ENCODE measurements at regions of chr6 and their contacts with region 1.

Region 1: GRCh38 chr6:11653028-11653583 is 115.6 kb downstream of the TMEM170B start:
- DNase-seq: no peak
- ATAC-seq: peak; percentile 52
- H3K4me3 ChIP-seq: no peak overlapping the region
- H3K27ac ChIP-seq: no peak overlapping the region
- H3K4me1 ChIP-seq: peaks cover 24% of the 10 kb centered on the region
- H3K27me3 ChIP-seq: no peaks in the 10 kb centered on the region
- CTCF ChIP-seq: no peak

Region 2: DNA sequence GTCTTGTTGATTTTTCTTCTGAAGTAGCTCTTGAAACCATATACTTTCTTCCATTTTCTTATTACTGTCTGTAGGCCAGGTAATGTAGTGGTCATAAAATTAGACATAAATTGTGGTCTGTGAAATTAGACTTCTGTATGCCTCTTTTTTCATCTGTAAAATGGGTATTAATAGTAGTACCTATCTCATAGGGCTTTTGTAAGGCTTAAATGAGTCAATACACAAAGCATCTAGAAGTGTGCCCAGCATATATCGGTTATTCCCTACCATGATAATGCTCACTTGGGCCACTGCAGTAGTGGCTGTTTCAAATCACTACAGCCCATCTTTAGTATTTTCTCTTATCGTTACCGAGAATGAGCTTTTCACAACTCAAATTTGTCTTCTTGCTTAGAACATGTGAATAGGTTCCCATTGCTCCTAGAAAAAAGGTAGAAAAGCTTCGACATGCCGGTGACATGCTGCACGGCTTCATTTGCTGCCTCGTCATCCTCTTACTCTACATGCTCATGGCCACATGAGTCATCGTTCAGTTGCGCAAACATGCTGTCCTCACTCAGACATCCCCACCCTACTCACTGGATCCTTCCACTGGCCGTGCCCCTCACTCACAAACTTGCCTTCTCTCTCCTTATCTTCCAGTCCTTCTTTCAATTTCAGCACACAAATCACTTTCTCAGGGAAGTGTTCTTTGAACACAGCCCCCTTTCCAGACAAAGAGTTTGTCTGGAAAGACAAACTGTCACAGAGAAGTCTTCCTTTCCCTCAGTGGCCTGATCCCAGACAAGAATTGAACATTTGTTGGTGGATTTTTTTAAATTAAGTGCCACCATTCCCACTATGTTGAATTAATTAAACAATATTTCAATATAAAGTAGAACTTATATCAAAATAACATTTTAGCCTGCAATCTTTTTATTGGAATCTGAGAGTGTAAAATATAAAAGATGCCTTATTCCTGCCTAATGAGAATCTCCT is 509.4 kb before region 1 on chr6:
- intact Hi-C with region 1: no loop called
- DNase-seq: peak; percentile 74
- ATAC-seq: peak; percentile 82
- H3K4me3 ChIP-seq: no peak overlapping the region
- H3K27ac ChIP-seq: no peak overlapping the region
- H3K4me1 ChIP-seq: no peaks in the 10 kb centered on the region
- H3K27me3 ChIP-seq: no peaks in the 10 kb centered on the region
- CTCF ChIP-seq: no peak

Region 3: DNA sequence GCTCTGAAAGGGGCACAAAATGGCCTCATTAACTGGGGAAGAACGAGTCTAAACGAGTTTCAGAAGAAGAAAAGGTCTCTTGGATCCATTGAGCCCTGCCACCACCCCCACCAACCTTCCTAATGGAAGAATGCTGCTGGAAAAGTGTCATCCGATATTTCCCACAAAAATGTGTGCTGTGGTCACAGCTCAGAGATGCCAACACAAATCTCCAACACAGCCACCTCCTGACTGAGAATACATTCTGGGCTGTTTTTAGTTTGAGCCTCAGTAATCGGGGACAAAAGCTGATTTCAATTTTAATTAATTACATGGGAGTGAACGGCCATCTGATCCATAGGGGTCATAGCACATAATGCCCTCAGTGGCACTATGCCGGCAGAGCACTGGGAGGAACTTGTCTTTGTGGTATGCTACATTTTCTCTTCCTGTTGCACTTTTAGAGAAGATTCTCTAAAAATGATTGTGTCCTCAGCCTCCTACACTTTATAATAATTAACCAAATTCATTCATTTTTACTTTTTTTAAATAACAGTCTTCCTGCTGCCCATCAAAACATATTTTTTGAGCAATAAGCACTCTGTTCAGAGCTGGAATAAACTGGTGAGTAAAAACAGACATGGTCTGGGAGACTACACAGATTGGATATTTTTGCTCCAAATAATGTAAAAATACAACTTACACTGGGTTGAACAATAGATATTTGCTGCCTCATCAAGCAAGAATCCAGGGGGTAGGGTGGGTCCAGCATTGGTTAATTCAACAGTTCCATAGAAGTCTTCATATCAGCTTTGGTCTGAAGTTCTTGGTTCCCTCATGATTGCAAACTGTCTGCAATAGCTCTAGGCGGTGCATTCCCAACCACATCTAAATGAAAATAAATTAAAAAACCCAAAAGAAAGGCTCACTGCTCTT is 259.1 kb before region 1 on chr6:
- intact Hi-C with region 1: no loop called
- DNase-seq: no peak
- ATAC-seq: no peak
- H3K4me3 ChIP-seq: no peak overlapping the region
- H3K27ac ChIP-seq: peak overlapping the region; percentile 75
- H3K4me1 ChIP-seq: peaks cover 51% of the 10 kb centered on the region
- H3K27me3 ChIP-seq: no peaks in the 10 kb centered on the region
- CTCF ChIP-seq: no peak

Region 4: DNA sequence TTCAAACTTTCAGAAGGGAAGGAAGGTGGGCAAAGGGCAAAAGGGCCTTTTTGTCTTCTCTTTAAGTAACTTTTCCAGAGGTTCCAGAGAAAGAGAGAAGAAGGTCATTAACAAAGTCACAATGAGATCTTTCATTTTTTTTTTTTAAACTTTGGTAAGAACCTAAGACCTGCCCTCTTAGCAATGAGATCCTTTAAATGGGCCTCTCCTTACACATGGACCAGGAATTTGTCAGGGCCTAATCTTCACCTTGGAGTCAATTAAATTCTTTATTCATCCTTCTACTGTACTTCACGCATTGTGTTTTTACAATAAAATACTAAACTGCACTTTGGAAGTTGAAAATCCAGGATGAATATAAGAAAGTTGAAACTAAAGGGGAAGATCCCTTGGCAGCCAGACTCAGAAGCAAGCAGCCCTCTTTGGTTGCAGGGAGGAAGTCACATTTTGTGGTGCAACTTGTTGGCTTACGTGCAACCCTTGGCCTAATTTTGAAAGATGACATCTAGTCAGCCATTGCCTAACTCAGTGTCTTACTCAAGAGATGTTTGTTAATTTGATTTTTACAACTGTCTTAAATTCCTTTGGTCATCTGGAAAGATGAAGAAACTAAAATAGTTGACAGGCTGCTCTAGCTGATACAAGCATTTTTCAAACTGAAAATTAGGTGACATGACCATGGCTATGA is 127.5 kb before region 1 on chr6:
- intact Hi-C with region 1: no loop called
- DNase-seq: no peak
- ATAC-seq: peak; percentile 81
- H3K4me3 ChIP-seq: no peak overlapping the region
- H3K27ac ChIP-seq: peak overlapping the region; percentile 43
- H3K4me1 ChIP-seq: peaks cover 10% of the 10 kb centered on the region
- H3K27me3 ChIP-seq: no peaks in the 10 kb centered on the region
- CTCF ChIP-seq: no peak

Region 5: DNA sequence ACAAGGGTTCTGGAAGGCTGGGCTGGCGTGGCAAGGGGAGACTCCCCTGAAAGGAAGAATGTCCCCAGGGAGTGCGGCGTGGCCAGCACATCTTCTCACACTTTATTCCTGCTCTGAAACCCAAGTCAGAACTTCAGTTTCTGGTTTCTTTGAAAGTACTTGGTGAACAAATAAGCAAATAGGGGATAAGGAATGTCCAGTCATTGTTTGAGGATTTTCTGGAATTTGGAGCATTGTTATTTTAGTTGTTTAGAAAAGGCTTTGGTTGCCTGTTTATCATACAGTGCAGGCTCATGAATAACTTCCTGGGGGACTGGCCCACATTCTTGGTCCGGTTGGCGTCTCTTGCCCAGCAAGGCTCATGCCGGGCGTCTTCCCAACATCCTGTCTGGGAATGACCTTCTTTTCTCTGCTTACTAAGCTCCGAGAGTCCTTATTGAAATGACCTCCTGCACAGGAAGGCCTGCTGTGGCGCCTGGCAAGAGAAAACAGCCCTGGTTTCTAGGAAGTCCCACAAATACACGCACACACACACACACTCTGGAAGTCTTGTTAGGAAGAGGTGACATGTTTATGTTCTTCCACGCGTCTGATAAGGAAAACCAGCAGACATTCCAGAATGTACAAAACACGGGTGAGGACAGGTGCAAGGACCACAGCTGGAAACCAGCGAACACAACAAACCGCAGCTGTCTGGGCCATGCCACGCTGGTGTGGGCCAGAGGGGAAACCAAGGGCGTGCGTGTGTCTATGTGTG is 43.6 kb before region 1 on chr6:
- intact Hi-C with region 1: loop called (anchors 10 kb)
- DNase-seq: no peak
- ATAC-seq: peak; percentile 79
- H3K4me3 ChIP-seq: no peak overlapping the region
- H3K27ac ChIP-seq: peak overlapping the region; percentile 44
- H3K4me1 ChIP-seq: peaks cover 42% of the 10 kb centered on the region
- H3K27me3 ChIP-seq: no peaks in the 10 kb centered on the region
- CTCF ChIP-seq: no peak

Region 6: DNA sequence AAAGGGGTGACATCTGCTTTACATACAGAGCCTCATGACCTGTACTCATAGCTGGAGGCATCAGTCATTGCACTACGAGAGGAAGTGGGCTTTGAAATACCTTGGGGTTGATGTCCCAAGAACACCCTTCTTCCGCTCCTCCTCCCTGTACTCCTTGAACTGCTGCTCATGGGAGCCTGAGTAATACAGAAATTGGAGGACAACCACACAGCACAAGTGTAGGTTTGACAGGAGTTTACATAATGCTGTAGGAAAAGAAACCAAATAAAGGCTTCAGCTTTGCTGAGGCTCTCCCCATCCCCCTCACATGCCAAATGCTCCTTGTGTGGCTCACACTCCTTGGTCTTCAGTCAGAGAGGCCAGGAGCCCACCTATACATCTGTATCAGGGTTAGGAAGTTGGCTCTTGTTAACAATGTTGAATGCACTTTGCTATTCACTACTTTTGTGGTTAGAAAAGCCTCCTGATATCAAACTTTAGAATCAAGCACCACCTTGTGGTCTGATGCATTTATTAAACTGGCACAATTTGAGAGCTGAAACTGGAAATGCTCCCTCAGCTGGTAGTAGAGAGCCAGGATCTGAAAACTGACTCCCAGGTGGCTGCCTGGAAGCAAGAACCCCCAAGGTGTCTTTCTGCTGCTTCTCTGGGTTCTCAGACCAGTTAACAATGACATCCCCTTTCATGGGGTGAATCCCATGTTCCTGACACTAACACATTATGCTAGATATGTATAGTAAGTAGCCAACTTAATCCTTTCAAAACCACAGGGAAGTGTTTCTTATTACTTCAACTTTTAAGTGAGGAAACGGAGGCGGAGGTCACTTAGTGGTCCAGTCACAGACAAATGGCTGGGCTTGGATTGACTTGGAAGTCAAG is 580.8 kb after region 1 on chr6:
- intact Hi-C with region 1: loop called (anchors 5 kb)
- DNase-seq: no peak
- ATAC-seq: peak; percentile 84
- H3K4me3 ChIP-seq: no peak overlapping the region
- H3K27ac ChIP-seq: no peak overlapping the region
- H3K4me1 ChIP-seq: peaks cover 9% of the 10 kb centered on the region
- H3K27me3 ChIP-seq: no peaks in the 10 kb centered on the region
- CTCF ChIP-seq: peak; percentile 75

Measured in upper lobe of right lung (tissue), 1 donor.